Posterior cingulate gyrus (tissue), 11 donors: ENCODE measurements at regions of chr5 and their contacts with region 1.

Region 1: DNA sequence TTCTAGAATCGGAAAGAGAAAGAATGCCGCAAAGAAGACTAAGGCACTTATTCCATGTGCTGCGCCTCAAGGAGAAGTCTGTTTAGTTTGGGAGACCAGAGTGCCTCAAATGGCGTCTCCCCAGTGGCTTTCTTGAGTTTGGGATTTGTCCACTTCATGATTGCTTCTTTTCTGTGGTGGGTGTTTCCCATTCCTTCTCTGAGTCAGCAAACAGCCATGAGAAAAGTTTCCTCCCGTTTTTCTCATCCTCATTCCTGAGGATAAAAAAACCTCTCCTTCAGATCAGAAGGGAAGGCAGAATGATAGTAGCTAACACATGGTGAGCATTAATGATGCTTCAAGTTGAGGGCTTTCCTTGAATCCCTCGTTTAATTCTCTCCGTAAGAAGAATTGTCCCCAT is 275.9 kb upstream of the WWC1 start:
- DNase-seq: no peak

Region 2: DNA sequence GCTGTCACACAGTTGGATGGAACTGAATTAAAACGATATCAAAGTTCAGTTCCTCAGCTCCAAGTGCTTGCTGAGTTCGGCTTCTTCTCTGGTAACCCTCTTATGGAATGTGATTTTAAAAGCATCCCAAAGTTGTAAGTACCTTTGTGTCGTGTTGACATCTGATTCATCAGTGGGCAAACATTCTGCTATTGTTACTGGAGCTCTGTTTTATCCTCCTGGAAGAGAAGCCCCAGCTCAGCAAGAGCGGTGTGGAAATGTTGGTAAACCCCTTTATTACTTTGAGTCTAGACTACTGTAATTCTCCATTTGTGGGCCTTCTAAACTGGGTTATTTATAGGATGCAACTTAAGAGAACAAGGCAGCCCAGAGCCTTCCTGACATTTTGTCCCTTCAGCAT is 423.4 kb before region 1 on chr5:
- intact Hi-C with region 1: loop called (anchors 10 kb)
- DNase-seq: no peak

Region 3: GRCh38 chr5:168706655-168707069 is 691.2 kb after region 1 on chr5:
- intact Hi-C with region 1: no loop called
- DNase-seq: peak in 9 of 10 donors; percentile 32 to 94 (median 64)